ENCODE measurements at regions of chr12 and their contacts with region 1.

Region 1: GRCh38 chr12:27434673-27435565 is 11.6 kb upstream of the SMCO2 start:
- DNase-seq: peak; percentile 44
- ATAC-seq: peak; percentile 63
- H3K4me3 Mint-ChIP-seq: no peak overlapping the region
- H3K27ac Mint-ChIP-seq: no peak overlapping the region
- H3K4me1 Mint-ChIP-seq: peaks cover 10% of the 10 kb centered on the region
- H3K27me3 Mint-ChIP-seq: peaks cover 8% of the 10 kb centered on the region

Region 2: DNA sequence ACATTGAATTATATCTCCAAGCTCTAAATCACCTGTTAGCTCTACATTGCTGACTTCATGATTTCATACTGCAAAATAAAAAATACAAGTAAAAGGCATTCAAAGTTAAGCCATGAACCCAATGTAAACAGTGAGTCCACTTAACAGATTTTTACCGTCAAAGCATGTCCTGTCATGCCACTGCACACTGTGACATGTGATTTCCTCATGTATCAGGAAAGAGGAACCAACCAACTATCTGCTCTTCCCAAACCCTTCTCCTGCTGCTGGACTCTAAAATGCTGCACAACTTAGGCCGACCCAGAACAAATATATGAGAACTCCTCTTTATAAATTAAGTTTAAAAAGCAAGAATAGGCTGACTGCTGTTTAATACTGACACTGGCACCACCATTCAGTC is 458.2 kb before region 1 on chr12:
- CTCF ChIA-PET with region 1: no interaction called
- POLR2A ChIA-PET with region 1: no interaction called
- intact Hi-C with region 1: no loop called
- DNase-seq: no peak
- ATAC-seq: no peak
- H3K4me3 Mint-ChIP-seq: no peak overlapping the region
- H3K27ac Mint-ChIP-seq: no peak overlapping the region
- H3K4me1 Mint-ChIP-seq: peaks cover 9% of the 10 kb centered on the region
- H3K27me3 Mint-ChIP-seq: no peaks in the 10 kb centered on the region

Region 3: DNA sequence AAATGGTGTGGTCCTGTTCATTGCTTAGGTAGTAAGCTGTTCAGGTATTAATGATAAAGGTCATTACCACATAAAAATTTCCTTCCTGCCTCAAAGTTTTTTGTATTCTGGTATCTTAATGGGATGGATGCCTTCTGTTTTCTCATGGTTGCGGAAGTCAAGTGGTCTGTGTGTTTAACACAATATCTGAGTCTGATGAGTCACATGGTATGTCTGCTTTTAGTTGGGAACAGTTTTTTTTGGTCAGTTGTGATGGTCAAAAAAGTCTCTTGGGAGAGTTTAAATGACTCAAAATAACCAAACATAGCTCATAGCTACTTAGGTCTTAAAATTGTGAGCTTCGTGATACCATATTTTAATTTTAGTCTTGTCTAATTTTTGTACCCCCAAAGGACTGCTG is 150.2 kb before region 1 on chr12:
- CTCF ChIA-PET with region 1: no interaction called
- POLR2A ChIA-PET with region 1: no interaction called
- intact Hi-C with region 1: no loop called
- DNase-seq: no peak
- ATAC-seq: no peak
- H3K4me3 Mint-ChIP-seq: no peak overlapping the region
- H3K27ac Mint-ChIP-seq: no peak overlapping the region
- H3K4me1 Mint-ChIP-seq: peaks cover 11% of the 10 kb centered on the region
- H3K27me3 Mint-ChIP-seq: no peaks in the 10 kb centered on the region

Region 4: GRCh38 chr12:27385766-27386564 is 49.0 kb before region 1 on chr12:
- CTCF ChIA-PET with region 1: no interaction called
- POLR2A ChIA-PET with region 1: no interaction called
- intact Hi-C with region 1: no loop called
- DNase-seq: no peak
- ATAC-seq: no peak
- H3K4me3 Mint-ChIP-seq: no peak overlapping the region
- H3K27ac Mint-ChIP-seq: no peak overlapping the region
- H3K4me1 Mint-ChIP-seq: no peaks in the 10 kb centered on the region
- H3K27me3 Mint-ChIP-seq: no peaks in the 10 kb centered on the region

Region 5: DNA sequence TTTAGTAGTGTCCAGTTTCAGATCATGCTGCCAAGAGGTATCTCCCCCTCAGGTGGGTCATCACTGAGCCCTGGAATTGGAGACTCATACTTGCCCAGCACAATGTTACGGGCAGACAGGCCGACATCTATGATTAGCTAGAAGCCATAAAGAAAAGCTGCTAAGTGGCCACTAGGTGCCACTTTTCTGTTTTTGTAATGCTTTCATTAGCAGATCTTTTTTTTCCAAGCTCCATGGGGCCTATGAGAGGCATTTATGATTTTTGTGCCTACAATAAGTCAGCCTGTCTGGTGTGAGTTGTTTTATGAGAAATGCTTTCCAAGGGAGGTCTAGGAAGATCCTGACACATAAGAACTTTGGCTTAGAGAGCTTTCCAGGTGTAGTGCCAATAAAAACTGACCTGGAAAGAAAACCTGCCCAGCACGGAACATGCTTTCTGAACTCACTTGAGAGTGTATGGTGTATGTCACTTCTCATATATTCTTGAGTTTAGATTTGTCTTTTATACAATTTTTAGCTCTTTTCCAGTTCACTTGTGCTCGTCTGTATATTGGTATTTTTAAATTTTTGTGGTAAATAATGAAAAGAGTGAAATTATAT is 10.2 kb before region 1 on chr12:
- CTCF ChIA-PET with region 1: interaction called, 18 read pairs
- POLR2A ChIA-PET with region 1: no interaction called
- intact Hi-C with region 1: no loop called
- DNase-seq: no peak
- ATAC-seq: no peak
- H3K4me3 Mint-ChIP-seq: no peak overlapping the region
- H3K27ac Mint-ChIP-seq: no peak overlapping the region
- H3K4me1 Mint-ChIP-seq: peaks cover 2% of the 10 kb centered on the region
- H3K27me3 Mint-ChIP-seq: no peaks in the 10 kb centered on the region

Region 6: GRCh38 chr12:27449026-27449425 is 14.1 kb after region 1 on chr12:
- CTCF ChIA-PET with region 1: interaction called, 13 read pairs
- POLR2A ChIA-PET with region 1: no interaction called
- intact Hi-C with region 1: no loop called
- DNase-seq: no peak
- ATAC-seq: no peak
- H3K4me3 Mint-ChIP-seq: no peak overlapping the region
- H3K27ac Mint-ChIP-seq: no peak overlapping the region
- H3K4me1 Mint-ChIP-seq: no peaks in the 10 kb centered on the region
- H3K27me3 Mint-ChIP-seq: peaks cover 6% of the 10 kb centered on the region

Region 7: DNA sequence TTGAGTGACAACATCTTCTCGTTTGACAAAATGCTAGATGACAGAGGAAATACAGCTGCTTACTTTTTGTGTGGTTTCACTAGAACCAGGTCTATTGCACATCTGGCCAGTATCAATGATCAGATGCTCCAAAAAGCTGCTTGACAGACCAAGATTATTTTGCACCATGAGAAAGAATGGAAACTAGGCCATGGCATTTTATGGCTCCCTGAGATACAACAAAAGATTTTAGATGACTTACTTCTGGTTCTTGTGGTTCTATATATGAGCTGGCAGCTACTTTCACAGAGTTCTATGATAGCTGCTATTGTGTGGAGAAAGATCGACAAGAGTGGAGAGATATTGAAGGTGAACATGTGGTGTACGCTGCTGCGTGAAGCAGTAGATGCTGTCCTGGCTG is 63.2 kb after region 1 on chr12:
- CTCF ChIA-PET with region 1: interaction called, 10 read pairs
- POLR2A ChIA-PET with region 1: no interaction called
- intact Hi-C with region 1: no loop called
- DNase-seq: peak; percentile 13
- ATAC-seq: peak; percentile 93
- H3K4me3 Mint-ChIP-seq: no peak overlapping the region
- H3K27ac Mint-ChIP-seq: no peak overlapping the region
- H3K4me1 Mint-ChIP-seq: peaks cover 26% of the 10 kb centered on the region
- H3K27me3 Mint-ChIP-seq: peaks cover 46% of the 10 kb centered on the region

Region 8: GRCh38 chr12:27635349-27635972 is 200.5 kb after region 1 on chr12:
- CTCF ChIA-PET with region 1: interaction called, 13 read pairs
- POLR2A ChIA-PET with region 1: no interaction called
- intact Hi-C with region 1: loop called in 1 of 2 experiments (anchors 1 kb)
- DNase-seq: no peak
- ATAC-seq: peak; percentile 26
- H3K4me3 Mint-ChIP-seq: no peak overlapping the region
- H3K27ac Mint-ChIP-seq: no peak overlapping the region
- H3K4me1 Mint-ChIP-seq: peaks cover 2% of the 10 kb centered on the region
- H3K27me3 Mint-ChIP-seq: no peaks in the 10 kb centered on the region

Region 9: GRCh38 chr12:27652174-27652763 is 217.3 kb after region 1 on chr12:
- CTCF ChIA-PET with region 1: interaction called, 26 read pairs
- POLR2A ChIA-PET with region 1: no interaction called
- intact Hi-C with region 1: loop called (anchors 1 kb)
- DNase-seq: peak; percentile 37
- ATAC-seq: no peak
- H3K4me3 Mint-ChIP-seq: no peak overlapping the region
- H3K27ac Mint-ChIP-seq: no peak overlapping the region
- H3K4me1 Mint-ChIP-seq: peaks cover 2% of the 10 kb centered on the region
- H3K27me3 Mint-ChIP-seq: no peaks in the 10 kb centered on the region

Region 10: DNA sequence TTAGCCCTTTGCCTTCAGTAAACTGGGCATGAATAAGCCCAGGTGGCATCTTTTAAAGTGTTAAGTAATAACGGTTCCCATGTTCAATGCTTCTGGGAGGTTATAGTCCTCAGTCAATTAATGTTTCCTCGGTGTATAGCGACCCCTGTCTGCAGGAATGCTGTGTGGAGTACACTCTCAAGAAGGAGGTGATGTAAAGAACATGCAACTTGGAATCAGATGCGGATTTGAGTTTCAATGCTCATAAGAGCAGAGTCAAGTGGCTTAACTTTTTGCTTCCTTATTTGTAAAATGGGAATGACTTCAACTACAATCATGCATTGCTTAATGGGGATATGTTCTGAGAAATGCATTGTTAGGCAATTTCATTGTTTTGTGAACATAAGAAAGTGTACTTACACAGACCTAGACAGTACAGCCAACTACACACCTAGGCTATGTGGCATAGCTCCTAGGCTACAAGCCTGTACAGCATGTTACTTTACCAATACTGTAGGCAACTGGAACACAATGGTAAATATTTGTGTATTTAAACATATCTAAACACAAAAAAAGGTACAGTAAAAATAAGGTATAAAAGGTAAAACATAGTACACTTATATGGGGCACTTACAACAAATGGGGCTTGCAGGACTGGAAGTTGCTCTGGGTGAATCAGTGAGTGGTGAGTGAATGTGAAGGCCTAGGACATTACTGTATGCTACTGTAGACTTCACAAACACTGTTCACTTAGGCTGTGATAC is 269.0 kb after region 1 on chr12:
- CTCF ChIA-PET with region 1: interaction called, 8 read pairs
- POLR2A ChIA-PET with region 1: no interaction called
- intact Hi-C with region 1: loop called (anchors 1 to 2 kb)
- DNase-seq: peak; percentile 87
- ATAC-seq: peak; percentile 98
- H3K4me3 Mint-ChIP-seq: no peak overlapping the region
- H3K27ac Mint-ChIP-seq: no peak overlapping the region
- H3K4me1 Mint-ChIP-seq: no peaks in the 10 kb centered on the region
- H3K27me3 Mint-ChIP-seq: peaks cover 6% of the 10 kb centered on the region

Measured in activated CD4-positive, alpha-beta T cell treated with anti-CD3 and anti-CD28 coated beads for 36 hours (primary cell).